Caco-2 (cell line): ENCODE measurements at regions of chr11 and their contacts with region 1.

Region 1: GRCh38 chr11:73307323-73308002 is 613 bp upstream of the ARHGEF17 start:
- DNase-seq: peak; percentile 100
- H3K4me3 ChIP-seq: peak overlapping the region; percentile 94
- H3K4me3 Mint-ChIP-seq: peak overlapping the region; percentile 76
- H3K27ac Mint-ChIP-seq: peak overlapping the region; percentile 87
- H3K4me1 ChIP-seq: peaks cover 31% of the 10 kb centered on the region
- H3K4me1 Mint-ChIP-seq: peaks cover 32% of the 10 kb centered on the region
- H3K27me3 ChIP-seq: no peaks in the 10 kb centered on the region
- H3K27me3 Mint-ChIP-seq: no peaks in the 10 kb centered on the region
- CTCF ChIP-seq: peak; percentile 96 to 98

Region 2: GRCh38 chr11:72771507-72771906 is 536.0 kb before region 1 on chr11:
- CTCF ChIA-PET with region 1: no interaction called
- POLR2A ChIA-PET with region 1: no interaction called
- intact Hi-C with region 1: no loop called
- DNase-seq: peak in 1 of 2 experiments; percentile 38
- H3K4me3 ChIP-seq: no peak overlapping the region
- H3K4me3 Mint-ChIP-seq: no peak overlapping the region
- H3K27ac Mint-ChIP-seq: no peak overlapping the region
- H3K4me1 ChIP-seq: peaks cover 26% of the 10 kb centered on the region
- H3K4me1 Mint-ChIP-seq: peaks cover 54% of the 10 kb centered on the region
- H3K27me3 ChIP-seq: no peaks in the 10 kb centered on the region
- H3K27me3 Mint-ChIP-seq: no peaks in the 10 kb centered on the region
- CTCF ChIP-seq: no peak

Region 3: DNA sequence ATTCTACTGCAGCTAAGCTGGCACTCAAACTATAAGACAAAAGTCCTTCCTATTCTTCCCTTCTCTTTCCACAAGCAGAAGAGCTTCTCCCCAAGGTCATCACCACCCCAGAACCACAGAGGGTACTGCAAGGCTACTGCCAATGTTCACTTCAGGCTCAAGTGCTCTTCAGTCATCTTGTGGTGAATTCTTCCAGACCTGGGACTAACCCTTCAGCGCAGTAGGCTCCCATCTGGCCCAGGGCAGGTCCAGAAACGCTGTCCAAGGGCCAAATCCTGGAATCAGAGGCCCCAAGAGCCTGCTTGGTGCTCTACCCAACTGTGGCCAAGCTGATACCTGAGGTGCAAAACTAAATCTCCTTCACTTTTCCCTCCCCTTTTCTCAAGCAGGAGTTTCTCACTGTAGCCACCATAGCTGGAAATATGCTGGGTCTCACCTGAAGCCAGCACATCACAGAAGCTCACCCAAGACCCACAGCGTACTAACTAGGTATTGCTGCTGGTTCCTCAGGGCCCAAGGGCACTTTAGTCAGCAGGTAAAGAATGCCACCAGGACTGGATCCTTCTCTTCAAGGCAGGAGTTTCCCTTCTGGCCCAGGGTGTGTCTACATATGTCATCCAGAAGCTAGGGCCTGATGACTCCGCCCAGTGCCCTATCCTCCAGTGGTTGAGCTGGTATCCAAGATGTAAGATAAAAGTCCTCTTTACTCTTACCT is 193.2 kb before region 1 on chr11:
- CTCF ChIA-PET with region 1: no interaction called
- POLR2A ChIA-PET with region 1: no interaction called
- intact Hi-C with region 1: no loop called
- DNase-seq: no peak
- H3K4me3 ChIP-seq: no peak overlapping the region
- H3K4me3 Mint-ChIP-seq: no peak overlapping the region
- H3K27ac Mint-ChIP-seq: peak overlapping the region; percentile 2
- H3K4me1 ChIP-seq: no peaks in the 10 kb centered on the region
- H3K4me1 Mint-ChIP-seq: no peaks in the 10 kb centered on the region
- H3K27me3 ChIP-seq: no peaks in the 10 kb centered on the region
- H3K27me3 Mint-ChIP-seq: no peaks in the 10 kb centered on the region
- CTCF ChIP-seq: no peak

Region 4: GRCh38 chr11:73135346-73136284 is 171.8 kb before region 1 on chr11:
- CTCF ChIA-PET with region 1: no interaction called
- POLR2A ChIA-PET with region 1: interaction called, 10 read pairs
- intact Hi-C with region 1: no loop called
- DNase-seq: peak; percentile 46 to 64
- H3K4me3 ChIP-seq: no peak overlapping the region
- H3K4me3 Mint-ChIP-seq: no peak overlapping the region
- H3K27ac Mint-ChIP-seq: peak overlapping the region; percentile 73
- H3K4me1 ChIP-seq: peaks cover 26% of the 10 kb centered on the region
- H3K4me1 Mint-ChIP-seq: peaks cover 23% of the 10 kb centered on the region
- H3K27me3 ChIP-seq: no peaks in the 10 kb centered on the region
- H3K27me3 Mint-ChIP-seq: no peaks in the 10 kb centered on the region
- CTCF ChIP-seq: no peak

Region 5: DNA sequence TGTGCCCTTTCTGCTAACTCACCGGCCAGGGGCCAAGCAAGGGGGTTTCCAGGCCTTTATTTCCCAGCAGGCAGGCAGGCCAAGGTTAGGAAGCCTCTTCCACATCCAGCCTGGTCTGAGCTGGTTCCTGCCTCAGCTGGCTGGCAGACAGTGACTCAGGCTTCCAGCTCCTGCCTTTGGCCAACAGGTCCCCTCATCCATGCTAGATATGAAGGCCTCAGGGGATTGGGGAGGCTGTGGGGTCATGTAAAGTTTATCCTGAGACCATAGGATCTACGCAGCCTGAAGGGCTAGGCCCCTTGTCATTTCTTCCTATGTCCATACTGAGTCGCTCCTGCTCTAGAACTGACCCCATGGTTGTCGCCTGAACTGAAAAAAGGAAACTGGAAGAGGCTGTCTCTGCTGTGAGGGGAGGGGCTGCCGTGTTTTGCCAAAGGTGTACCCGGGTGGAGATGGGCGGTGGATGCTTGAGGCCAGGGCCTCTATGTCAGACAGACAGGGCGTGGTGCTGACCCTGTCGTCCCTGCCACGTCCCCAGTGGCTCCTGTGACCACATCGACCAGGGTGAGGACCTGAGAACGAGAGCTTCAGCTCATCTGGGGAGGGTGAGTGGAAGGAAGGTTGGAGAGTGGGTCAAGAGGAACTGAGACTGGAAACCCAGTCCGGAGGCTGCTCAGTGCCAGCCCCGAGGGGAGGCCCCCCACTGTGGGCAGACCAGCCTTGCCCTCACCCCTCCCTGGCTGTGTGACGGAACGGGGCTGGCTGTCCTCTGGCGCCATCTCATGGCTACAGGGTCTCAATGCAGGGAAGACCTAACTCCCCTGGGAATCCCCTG is 18.4 kb before region 1 on chr11:
- CTCF ChIA-PET with region 1: interaction called, 19 read pairs
- POLR2A ChIA-PET with region 1: interaction called, 4 read pairs
- intact Hi-C with region 1: no loop called
- DNase-seq: peak; percentile 87 to 88
- H3K4me3 ChIP-seq: no peak overlapping the region
- H3K4me3 Mint-ChIP-seq: no peak overlapping the region
- H3K27ac Mint-ChIP-seq: peak overlapping the region; percentile 51
- H3K4me1 ChIP-seq: peaks cover 57% of the 10 kb centered on the region
- H3K4me1 Mint-ChIP-seq: peaks cover 27% of the 10 kb centered on the region
- H3K27me3 ChIP-seq: no peaks in the 10 kb centered on the region
- H3K27me3 Mint-ChIP-seq: no peaks in the 10 kb centered on the region
- CTCF ChIP-seq: peak; percentile 99

Region 6: DNA sequence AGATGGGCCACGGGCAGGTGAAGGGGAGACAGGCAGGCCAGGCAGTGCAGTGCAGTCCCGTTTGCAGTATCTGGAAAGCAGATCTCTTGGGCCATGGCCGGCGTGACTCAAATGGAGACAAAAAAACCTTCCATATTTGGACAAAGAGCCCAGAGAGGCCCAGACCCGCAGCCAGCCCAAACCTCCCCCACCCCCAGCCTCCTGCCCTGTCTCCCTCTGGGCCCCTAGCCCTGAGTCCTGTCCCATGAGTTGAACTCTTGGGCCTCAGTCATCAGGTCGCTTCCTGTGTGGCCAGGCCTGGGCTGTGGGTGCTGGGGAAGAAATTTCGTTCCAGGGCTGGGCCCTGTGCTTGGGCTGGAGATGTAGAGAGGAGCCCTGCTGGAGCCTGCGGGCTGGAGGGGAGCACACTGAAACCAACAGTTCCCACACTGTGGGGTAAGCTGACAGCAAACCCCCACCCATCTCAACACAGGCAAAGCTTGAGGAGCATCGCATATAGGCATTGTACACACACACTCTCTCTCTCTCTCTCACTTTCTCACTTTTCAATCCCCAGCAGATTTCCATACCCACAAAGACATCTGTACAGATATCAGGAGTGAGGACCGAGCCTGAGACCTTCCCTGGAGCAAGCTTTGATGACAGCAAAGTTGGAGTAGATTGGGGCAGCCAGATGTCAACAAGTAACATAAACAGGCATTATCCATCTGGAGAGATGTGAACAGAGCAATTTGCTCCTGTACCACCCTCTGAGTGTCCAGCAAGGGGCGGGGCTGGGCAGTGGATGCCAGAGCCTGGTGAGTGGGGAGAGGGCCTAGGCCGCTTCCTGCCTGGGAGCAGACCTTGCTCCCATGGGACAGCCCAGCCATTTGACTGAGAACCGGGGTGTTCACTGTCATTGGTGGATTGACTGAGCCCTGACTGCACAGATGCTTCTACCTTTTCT is 17.8 kb after region 1 on chr11:
- CTCF ChIA-PET with region 1: interaction called, 46 read pairs
- POLR2A ChIA-PET with region 1: interaction called, 36 read pairs
- intact Hi-C with region 1: no loop called
- DNase-seq: no peak
- H3K4me3 ChIP-seq: no peak overlapping the region
- H3K4me3 Mint-ChIP-seq: no peak overlapping the region
- H3K27ac Mint-ChIP-seq: no peak overlapping the region
- H3K4me1 ChIP-seq: peaks cover 22% of the 10 kb centered on the region
- H3K4me1 Mint-ChIP-seq: peaks cover 45% of the 10 kb centered on the region
- H3K27me3 ChIP-seq: no peaks in the 10 kb centered on the region
- H3K27me3 Mint-ChIP-seq: no peaks in the 10 kb centered on the region
- CTCF ChIP-seq: no peak

Region 7: GRCh38 chr11:73350908-73351636 is 43.6 kb after region 1 on chr11:
- CTCF ChIA-PET with region 1: interaction called, 42 read pairs
- POLR2A ChIA-PET with region 1: interaction called, 10 read pairs
- intact Hi-C with region 1: no loop called
- DNase-seq: peak in 1 of 2 experiments; percentile 76
- H3K4me3 ChIP-seq: no peak overlapping the region
- H3K4me3 Mint-ChIP-seq: no peak overlapping the region
- H3K27ac Mint-ChIP-seq: no peak overlapping the region
- H3K4me1 ChIP-seq: no peaks in the 10 kb centered on the region
- H3K4me1 Mint-ChIP-seq: no peaks in the 10 kb centered on the region
- H3K27me3 ChIP-seq: no peaks in the 10 kb centered on the region
- H3K27me3 Mint-ChIP-seq: no peaks in the 10 kb centered on the region
- CTCF ChIP-seq: peak; percentile 99

Region 8: GRCh38 chr11:73376160-73376802 is 68.8 kb after region 1 on chr11 and contains the start of gene RELT:
- CTCF ChIA-PET with region 1: interaction called, 4 read pairs
- POLR2A ChIA-PET with region 1: no interaction called
- intact Hi-C with region 1: loop called (anchors 1 kb)
- DNase-seq: peak; percentile 92 to 99
- H3K4me3 ChIP-seq: peak within 1 kb of the TSS; percentile 91
- H3K4me3 Mint-ChIP-seq: peak within 1 kb of the TSS; percentile 83
- H3K27ac Mint-ChIP-seq: peak within 1 kb of the TSS; percentile 37
- H3K4me1 ChIP-seq: peaks cover 11% of the 10 kb centered on the region; the same call in 1 of the 2 replicates
- H3K4me1 Mint-ChIP-seq: peaks cover 18% of the 10 kb centered on the region
- H3K27me3 ChIP-seq: no peaks in the 10 kb centered on the region
- H3K27me3 Mint-ChIP-seq: no peaks in the 10 kb centered on the region
- CTCF ChIP-seq: peak; percentile 96 to 98
- total RNA-seq, gene RELT: 11.7 and 12.7 TPM in 2 replicates